Mammary epithelial cell (primary cell): ENCODE measurements at regions of chr19 and their contacts with region 1.

Region 1: DNA sequence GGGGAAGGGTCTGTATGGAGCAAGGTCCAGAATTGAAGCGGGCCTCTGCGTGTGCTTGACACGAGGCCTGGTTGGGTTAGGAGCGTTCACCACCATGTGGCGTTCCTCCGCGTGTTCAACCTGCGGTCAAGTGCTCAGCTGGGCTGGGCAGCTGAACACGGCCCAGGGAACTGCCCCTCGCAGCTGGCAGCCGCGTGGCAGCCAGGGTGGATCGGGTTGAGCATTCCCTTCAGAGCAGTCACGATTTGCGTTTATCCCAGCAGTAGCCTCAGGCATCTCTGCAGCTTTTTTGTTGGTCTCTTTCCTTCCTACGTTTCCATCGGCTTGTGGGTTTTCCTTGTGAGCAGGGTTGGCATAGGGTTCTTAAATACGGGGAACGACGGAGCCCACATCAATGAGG is 28.7 kb upstream of the F2RL3 start:
- DNase-seq: no peak
- H3K4me3 ChIP-seq: no peak overlapping the region
- H3K27ac ChIP-seq: no peak overlapping the region
- H3K4me1 ChIP-seq: no peaks in the 10 kb centered on the region
- H3K27me3 ChIP-seq: no peaks in the 10 kb centered on the region
- CTCF ChIP-seq: no peak

Region 2: DNA sequence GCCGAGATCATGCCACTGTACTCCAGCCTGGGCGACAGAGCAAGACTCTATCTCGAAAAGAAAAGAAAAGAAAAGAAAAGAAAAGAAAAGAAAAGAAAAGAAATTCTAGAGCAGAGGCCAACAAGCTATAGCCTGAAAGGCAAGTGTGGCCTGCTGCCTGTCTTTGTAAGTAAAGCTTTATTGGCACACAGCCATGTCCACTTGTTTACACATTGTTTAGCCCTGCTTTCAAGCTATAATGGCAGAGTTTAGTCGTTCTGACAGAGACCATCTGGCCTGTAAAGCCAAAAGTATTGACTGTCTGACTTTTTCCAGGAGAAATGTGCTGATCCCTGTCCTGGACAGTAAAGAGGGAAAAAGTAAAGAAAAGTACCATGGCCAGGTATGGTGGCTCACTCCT is 122.2 kb before region 1 on chr19:
- CTCF ChIA-PET with region 1: no interaction called
- dilution Hi-C with region 1: loop called (anchors 10 kb)
- in situ Hi-C with region 1: no loop called
- intact Hi-C with region 1: no loop called
- DNase-seq: no peak
- H3K4me3 ChIP-seq: no peak overlapping the region
- H3K27ac ChIP-seq: no peak overlapping the region
- H3K4me1 ChIP-seq: peaks cover 5% of the 10 kb centered on the region
- H3K27me3 ChIP-seq: no peaks in the 10 kb centered on the region
- CTCF ChIP-seq: no peak

Region 3: DNA sequence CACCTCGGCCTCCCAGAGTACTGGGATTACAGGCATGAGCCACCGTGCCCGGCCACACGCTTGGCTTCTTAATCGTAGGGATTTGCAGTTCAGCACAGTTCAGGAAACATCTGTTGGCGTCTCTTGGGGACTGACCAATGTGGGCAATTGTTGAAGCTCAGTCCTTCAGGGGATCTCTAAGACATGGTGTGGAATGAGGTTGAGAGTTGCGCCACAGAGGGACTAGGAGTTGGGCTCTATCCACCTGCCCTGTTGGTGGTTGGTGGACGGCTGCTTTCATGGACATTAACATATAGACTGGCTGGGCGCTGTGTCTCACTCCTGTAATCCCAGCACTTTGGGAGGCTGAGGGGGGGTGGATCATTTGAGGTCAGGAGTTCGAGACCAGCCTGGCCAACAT is 68.2 kb before region 1 on chr19:
- CTCF ChIA-PET with region 1: no interaction called
- dilution Hi-C with region 1: loop called (anchors 5 kb)
- in situ Hi-C with region 1: no loop called
- intact Hi-C with region 1: no loop called
- DNase-seq: no peak
- H3K4me3 ChIP-seq: no peak overlapping the region
- H3K27ac ChIP-seq: no peak overlapping the region
- H3K4me1 ChIP-seq: no peaks in the 10 kb centered on the region
- H3K27me3 ChIP-seq: no peaks in the 10 kb centered on the region
- CTCF ChIP-seq: no peak

Region 4: DNA sequence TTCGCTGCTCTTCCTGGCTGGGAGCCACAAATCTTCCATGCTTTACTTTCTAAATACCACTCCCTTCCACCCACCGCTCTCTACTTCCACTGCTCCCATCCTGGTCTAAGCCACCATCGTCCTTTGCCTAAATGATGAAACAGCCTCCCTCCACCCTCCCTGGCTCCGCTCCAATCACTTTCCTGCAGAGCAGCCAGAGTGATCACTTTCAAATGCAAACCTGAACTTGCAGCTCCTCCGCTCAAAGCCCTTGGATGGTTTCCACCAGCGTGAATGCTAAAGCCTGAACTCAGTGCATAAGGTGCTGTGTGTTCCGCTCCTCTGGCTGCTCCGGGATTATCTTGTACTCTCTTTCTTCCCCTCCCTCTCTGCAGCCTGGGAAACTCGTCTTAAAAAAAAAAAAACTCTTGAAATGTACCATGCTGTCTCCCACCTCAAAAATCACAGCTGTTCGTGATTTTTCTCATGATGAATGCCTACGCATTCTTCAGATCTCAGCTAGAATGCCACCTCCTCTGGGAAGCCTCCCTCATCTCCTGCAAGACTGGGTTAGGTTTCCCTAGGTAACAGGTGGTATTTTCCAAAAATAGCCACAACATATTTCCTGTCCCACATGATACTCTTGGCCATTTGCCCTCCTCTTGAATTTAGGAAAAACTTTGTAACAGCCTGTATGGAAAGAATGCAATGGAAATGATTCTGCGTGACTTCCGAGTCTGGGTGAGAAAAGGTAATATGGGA is 34.6 kb before region 1 on chr19:
- CTCF ChIA-PET with region 1: no interaction called
- dilution Hi-C with region 1: no loop called
- in situ Hi-C with region 1: no loop called
- intact Hi-C with region 1: no loop called
- DNase-seq: peak; percentile 48
- H3K4me3 ChIP-seq: peak overlapping the region; percentile 11 to 26 (median 26)
- H3K27ac ChIP-seq: peak overlapping the region; percentile 16
- H3K4me1 ChIP-seq: peaks cover 37% of the 10 kb centered on the region
- H3K27me3 ChIP-seq: no peaks in the 10 kb centered on the region
- CTCF ChIP-seq: no peak

Region 5: GRCh38 chr19:17058236-17058635 is 198.1 kb after region 1 on chr19:
- CTCF ChIA-PET with region 1: no interaction called
- dilution Hi-C with region 1: loop called (anchors 5 kb)
- in situ Hi-C with region 1: no loop called
- intact Hi-C with region 1: no loop called
- DNase-seq: peak; percentile 39
- H3K4me3 ChIP-seq: no peak overlapping the region
- H3K27ac ChIP-seq: no peak overlapping the region
- H3K4me1 ChIP-seq: no peaks in the 10 kb centered on the region
- H3K27me3 ChIP-seq: no peaks in the 10 kb centered on the region
- CTCF ChIP-seq: no peak